HCT116 (cell line): ENCODE measurements at regions of chr17 and their contacts with region 1.

Region 1: DNA sequence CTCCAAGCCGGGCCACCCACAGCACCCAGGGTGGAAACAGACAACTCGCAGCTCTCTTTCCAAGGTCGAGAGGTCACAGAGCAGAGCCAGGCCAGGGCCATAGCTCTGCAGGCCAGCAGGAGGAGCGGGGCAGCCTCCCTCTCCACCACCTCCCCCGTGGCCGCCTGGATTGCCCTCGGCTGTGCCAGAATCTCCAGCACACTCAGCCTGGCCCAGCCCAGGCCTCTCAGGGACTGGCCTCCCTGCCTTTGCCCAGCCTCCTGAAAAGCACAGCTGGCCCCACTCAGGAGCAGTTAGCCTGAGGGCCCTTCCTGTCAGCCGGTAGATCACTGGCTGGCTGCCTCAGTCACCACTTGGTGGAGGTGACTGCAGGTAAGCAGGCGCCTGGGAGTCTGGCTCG is 85.8 kb upstream of the SEC14L1 start:
- DNase-seq: no peak
- ATAC-seq: no peak
- H3K4me3 ChIP-seq: no peak overlapping the region
- H3K27ac ChIP-seq: no peak overlapping the region
- H3K4me1 ChIP-seq: peaks cover 0 to 6% of the 10 kb centered on the region in 2 experiments; a peak in 1 of 4 replicates
- H3K27me3 ChIP-seq: no peaks in the 10 kb centered on the region
- CTCF ChIP-seq: no peak
- POLR2A ChIP-seq: no peak
- RAD21 ChIP-seq: no peak

Region 2: GRCh38 chr17:76726231-76726775 is 328.6 kb before region 1 on chr17 and contains the start of gene JMJD6:
- CTCF ChIA-PET with region 1: interaction called, 3 read pairs
- POLR2A ChIA-PET with region 1: no interaction called
- RAD21 ChIA-PET with region 1: no interaction called
- intact Hi-C with region 1: loop called (anchors 2 kb)
- DNase-seq: peak; percentile 97
- ATAC-seq: peak; percentile 90
- H3K4me3 ChIP-seq: peak within 1 kb of the TSS; percentile 97
- H3K27ac ChIP-seq: peak within 1 kb of the TSS; percentile 99
- H3K4me1 ChIP-seq: peaks cover 13 to 21% of the 10 kb centered on the region in 2 experiments
- H3K27me3 ChIP-seq: no peaks in the 10 kb centered on the region
- CTCF ChIP-seq: no peak
- POLR2A ChIP-seq: peak; percentile 39
- RAD21 ChIP-seq: no peak
- total RNA-seq, gene JMJD6: 47.6 TPM

Region 3: GRCh38 chr17:76816590-76817135 is 238.3 kb before region 1 on chr17:
- CTCF ChIA-PET with region 1: interaction called, 5 read pairs
- POLR2A ChIA-PET with region 1: no interaction called
- RAD21 ChIA-PET with region 1: no interaction called
- intact Hi-C with region 1: loop called (anchors 2 kb)
- DNase-seq: peak; percentile 63
- ATAC-seq: peak; percentile 96
- H3K4me3 ChIP-seq: no peak overlapping the region
- H3K27ac ChIP-seq: no peak overlapping the region
- H3K4me1 ChIP-seq: peaks cover 2 to 8% of the 10 kb centered on the region in 2 experiments; a peak in 3 of 4 replicates
- H3K27me3 ChIP-seq: peaks cover 4% of the 10 kb centered on the region; the same call in 1 of the 2 replicates
- CTCF ChIP-seq: peak; percentile 90 to 92 (median 91)
- POLR2A ChIP-seq: no peak
- RAD21 ChIP-seq: peak; percentile 92

Region 4: DNA sequence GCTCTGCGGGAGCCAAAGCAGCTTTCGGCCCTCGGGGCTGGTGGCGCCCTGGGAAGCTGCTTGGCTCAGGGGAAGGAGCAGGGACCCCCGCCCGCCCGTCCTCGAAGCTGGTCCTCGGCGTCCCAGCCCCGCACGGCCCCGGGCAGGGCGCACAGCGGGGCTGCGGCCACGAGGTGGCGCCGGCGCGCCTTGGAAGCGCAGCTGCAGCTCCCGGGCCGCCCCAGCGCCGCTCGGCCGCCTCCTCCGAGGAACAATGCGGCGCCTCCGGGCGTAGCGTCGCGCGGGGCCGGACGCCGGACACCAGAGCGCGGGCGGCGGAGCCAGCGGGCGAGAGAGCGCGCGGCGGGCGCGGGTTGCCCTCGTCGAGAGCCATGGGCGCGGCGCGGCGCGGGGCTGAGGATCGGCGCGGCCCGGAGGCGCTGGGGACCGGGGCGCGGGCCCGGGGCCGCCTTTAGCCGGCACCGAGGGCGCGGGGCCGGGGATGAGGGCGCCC is 186.7 kb before region 1 on chr17 and contains the start of gene MGAT5B:
- CTCF ChIA-PET with region 1: interaction called, 73 read pairs
- POLR2A ChIA-PET with region 1: interaction called, 3 read pairs
- RAD21 ChIA-PET with region 1: interaction called, 11 to 13 read pairs
- intact Hi-C with region 1: loop called (anchors 1 kb)
- DNase-seq: peak; percentile 56
- ATAC-seq: peak; percentile 81
- H3K4me3 ChIP-seq: peak within 1 kb of the TSS; percentile 29 to 42
- H3K27ac ChIP-seq: peak within 1 kb of the TSS; percentile 26; the same call in 1 of the 2 replicates
- H3K4me1 ChIP-seq: peaks cover 32 to 50% of the 10 kb centered on the region in 2 experiments
- H3K27me3 ChIP-seq: no peaks in the 10 kb centered on the region
- CTCF ChIP-seq: peak; percentile 68 to 81 (median 80)
- POLR2A ChIP-seq: no peak
- RAD21 ChIP-seq: peak; percentile 89
- total RNA-seq, gene MGAT5B: 4.4 TPM

Region 5: GRCh38 chr17:77011173-77012011 is 43.5 kb before region 1 on chr17:
- CTCF ChIA-PET with region 1: interaction called, 20 read pairs
- POLR2A ChIA-PET with region 1: no interaction called
- RAD21 ChIA-PET with region 1: interaction called, 3 read pairs
- intact Hi-C with region 1: loop called (anchors 1 kb)
- DNase-seq: peak; percentile 48
- ATAC-seq: peak; percentile 81
- H3K4me3 ChIP-seq: no peak overlapping the region
- H3K27ac ChIP-seq: no peak overlapping the region
- H3K4me1 ChIP-seq: no peaks in the 10 kb centered on the region
- H3K27me3 ChIP-seq: no peaks in the 10 kb centered on the region
- CTCF ChIP-seq: peak; percentile 88 to 93 (median 89)
- POLR2A ChIP-seq: no peak
- RAD21 ChIP-seq: peak; percentile 89